CD4-positive, alpha-beta memory T cell (primary cell): ENCODE measurements at regions of chr3 and their contacts with region 1.

Region 1: GRCh38 chr3:195542698-195543499 is at the start of gene PPP1R2:
- DNase-seq: peak; percentile 88 to 94 (median 92)
- H3K4me3 ChIP-seq: peak within 1 kb of the TSS; percentile 66 to 82
- H3K4me3 Mint-ChIP-seq: peak within 1 kb of the TSS; percentile 88 to 96 (median 91)
- H3K27ac ChIP-seq: peak within 1 kb of the TSS; percentile 98
- H3K27ac Mint-ChIP-seq: peak within 1 kb of the TSS; percentile 92 to 97 (median 95)
- H3K4me1 ChIP-seq: peaks cover 77% of the 10 kb centered on the region
- H3K4me1 Mint-ChIP-seq: peaks cover 47 to 90% (median 66%) of the 10 kb centered on the region in 4 donors
- H3K27me3 ChIP-seq: no peaks in the 10 kb centered on the region
- H3K27me3 Mint-ChIP-seq: no peaks in the 10 kb centered on the region
- total RNA-seq, gene PPP1R2: 136 to 137 TPM

Region 2: DNA sequence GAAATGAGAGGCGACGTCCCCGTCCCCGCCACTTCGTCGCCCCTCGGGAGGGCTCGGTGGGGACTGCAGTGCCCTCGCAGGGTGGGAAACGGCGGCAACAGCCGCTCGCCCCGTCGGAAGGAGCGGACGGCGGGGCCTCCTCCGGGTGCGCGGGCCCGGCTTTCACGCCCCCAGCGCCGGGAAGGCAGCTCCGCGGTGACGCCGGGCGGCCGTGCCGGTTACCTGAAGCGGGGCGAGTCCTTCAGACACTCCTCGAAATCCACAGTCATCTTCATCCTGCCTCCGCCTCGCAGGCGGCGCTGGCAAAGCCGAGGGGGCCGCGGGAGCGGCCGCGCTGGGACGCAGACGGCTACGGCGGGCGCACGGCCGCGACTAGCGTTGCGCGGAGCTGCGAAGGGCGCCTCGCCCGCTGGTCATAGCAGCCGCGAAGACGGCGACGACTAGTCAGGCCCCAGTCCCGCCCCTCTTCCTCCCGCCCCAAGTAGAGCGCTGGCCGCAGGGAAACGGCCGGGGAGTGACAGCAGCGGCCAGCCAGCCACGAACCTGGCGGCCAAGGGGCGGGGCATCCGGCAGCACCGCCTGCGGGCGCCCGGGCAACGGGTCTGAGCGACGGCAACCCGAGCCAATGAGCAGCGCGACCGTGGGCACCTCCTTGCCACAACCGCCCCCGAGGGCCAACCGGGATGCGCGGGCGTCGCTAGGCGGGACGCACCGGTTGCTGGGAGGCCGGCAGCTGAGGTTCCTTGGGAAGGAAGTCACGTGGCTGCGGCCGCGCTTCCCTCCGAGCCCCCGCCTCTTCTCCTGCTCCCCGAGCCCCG is 100.1 kb before region 1 on chr3 and contains the start of gene ACAP2:
- CTCF ChIA-PET with region 1: no interaction called
- POLR2A ChIA-PET with region 1: interaction called, 21 read pairs
- intact Hi-C with region 1: loop called (anchors 1 kb)
- DNase-seq: peak; percentile 97 to 99 (median 98)
- H3K4me3 ChIP-seq: peak within 1 kb of the TSS; percentile 82 to 87
- H3K4me3 Mint-ChIP-seq: peak within 1 kb of the TSS; percentile 93 to 97 (median 94)
- H3K27ac ChIP-seq: peak within 1 kb of the TSS; percentile 89
- H3K27ac Mint-ChIP-seq: peak within 1 kb of the TSS; percentile 91 to 96 (median 94)
- H3K4me1 ChIP-seq: peaks cover 54% of the 10 kb centered on the region
- H3K4me1 Mint-ChIP-seq: peaks cover 32 to 60% (median 43%) of the 10 kb centered on the region in 4 donors
- H3K27me3 ChIP-seq: no peaks in the 10 kb centered on the region
- H3K27me3 Mint-ChIP-seq: no peaks in the 10 kb centered on the region
- total RNA-seq, gene ACAP2: 72.3 to 73.5 TPM

Region 3: GRCh38 chr3:195532834-195533233 is 10.1 kb before region 1 on chr3:
- CTCF ChIA-PET with region 1: interaction called, 5 read pairs
- POLR2A ChIA-PET with region 1: interaction called, 53 read pairs
- intact Hi-C with region 1: loop called (anchors 1 kb)
- DNase-seq: no peak
- H3K4me3 ChIP-seq: no peak overlapping the region
- H3K4me3 Mint-ChIP-seq: peak overlapping the region in 6 of 8 donors; percentile 21 to 77 (median 58)
- H3K27ac ChIP-seq: no peak overlapping the region
- H3K27ac Mint-ChIP-seq: peak overlapping the region in 2 of 7 donors; percentile 27 to 86
- H3K4me1 ChIP-seq: peaks cover 87% of the 10 kb centered on the region
- H3K4me1 Mint-ChIP-seq: peaks cover 55 to 95% (median 73%) of the 10 kb centered on the region in 4 donors
- H3K27me3 ChIP-seq: no peaks in the 10 kb centered on the region
- H3K27me3 Mint-ChIP-seq: no peaks in the 10 kb centered on the region

Region 4: GRCh38 chr3:195566814-195567213 is 23.9 kb after region 1 on chr3:
- CTCF ChIA-PET with region 1: no interaction called
- POLR2A ChIA-PET with region 1: no interaction called
- intact Hi-C with region 1: no loop called
- DNase-seq: no peak
- H3K4me3 ChIP-seq: no peak overlapping the region
- H3K4me3 Mint-ChIP-seq: no peak overlapping the region
- H3K27ac ChIP-seq: no peak overlapping the region
- H3K27ac Mint-ChIP-seq: no peak overlapping the region
- H3K4me1 ChIP-seq: no peaks in the 10 kb centered on the region
- H3K4me1 Mint-ChIP-seq: peaks cover 0 to 9% (median 2%) of the 10 kb centered on the region in 4 donors
- H3K27me3 ChIP-seq: no peaks in the 10 kb centered on the region
- H3K27me3 Mint-ChIP-seq: no peaks in the 10 kb centered on the region

Region 5: GRCh38 chr3:195609229-195609628 is 66.3 kb after region 1 on chr3:
- CTCF ChIA-PET with region 1: no interaction called
- POLR2A ChIA-PET with region 1: interaction called, 12 read pairs
- intact Hi-C with region 1: no loop called
- DNase-seq: peak; percentile 70 to 86 (median 82)
- H3K4me3 ChIP-seq: no peak overlapping the region
- H3K4me3 Mint-ChIP-seq: peak overlapping the region; percentile 23 to 75 (median 50)
- H3K27ac ChIP-seq: peak overlapping the region; percentile 7
- H3K27ac Mint-ChIP-seq: peak overlapping the region; percentile 66 to 97 (median 83)
- H3K4me1 ChIP-seq: peaks cover 25% of the 10 kb centered on the region
- H3K4me1 Mint-ChIP-seq: peaks cover 17 to 38% (median 29%) of the 10 kb centered on the region in 4 donors
- H3K27me3 ChIP-seq: no peaks in the 10 kb centered on the region
- H3K27me3 Mint-ChIP-seq: no peaks in the 10 kb centered on the region

Region 6: GRCh38 chr3:195909644-195910508 is 367.0 kb after region 1 on chr3:
- CTCF ChIA-PET with region 1: no interaction called
- POLR2A ChIA-PET with region 1: interaction called, 15 read pairs
- intact Hi-C with region 1: loop called (anchors 2 kb)
- DNase-seq: peak; percentile 86 to 88 (median 87)
- H3K4me3 ChIP-seq: peak overlapping the region; percentile 42 to 47
- H3K4me3 Mint-ChIP-seq: peak overlapping the region; percentile 57 to 79 (median 65)
- H3K27ac ChIP-seq: peak overlapping the region; percentile 58
- H3K27ac Mint-ChIP-seq: peak overlapping the region in 6 of 7 donors; percentile 46 to 88 (median 76)
- H3K4me1 ChIP-seq: peaks cover 43% of the 10 kb centered on the region
- H3K4me1 Mint-ChIP-seq: peaks cover 22 to 46% (median 33%) of the 10 kb centered on the region in 4 donors
- H3K27me3 ChIP-seq: no peaks in the 10 kb centered on the region
- H3K27me3 Mint-ChIP-seq: no peaks in the 10 kb centered on the region